ENCODE measurements at regions of chr1 and their contacts with region 1.

Region 1: GRCh38 chr1:233240829-233241682 is 54.5 kb downstream of the PCNX2 start:
- DNase-seq: peak; percentile 76
- H3K4me3 ChIP-seq: no peak overlapping the region
- H3K27ac ChIP-seq: no peak overlapping the region
- H3K4me1 ChIP-seq: no peaks in the 10 kb centered on the region
- H3K27me3 ChIP-seq: no peaks in the 10 kb centered on the region
- CTCF ChIP-seq: peak in 2 of 3 experiments; percentile 58 to 67
- POLR2A ChIP-seq: no peak

Region 2: DNA sequence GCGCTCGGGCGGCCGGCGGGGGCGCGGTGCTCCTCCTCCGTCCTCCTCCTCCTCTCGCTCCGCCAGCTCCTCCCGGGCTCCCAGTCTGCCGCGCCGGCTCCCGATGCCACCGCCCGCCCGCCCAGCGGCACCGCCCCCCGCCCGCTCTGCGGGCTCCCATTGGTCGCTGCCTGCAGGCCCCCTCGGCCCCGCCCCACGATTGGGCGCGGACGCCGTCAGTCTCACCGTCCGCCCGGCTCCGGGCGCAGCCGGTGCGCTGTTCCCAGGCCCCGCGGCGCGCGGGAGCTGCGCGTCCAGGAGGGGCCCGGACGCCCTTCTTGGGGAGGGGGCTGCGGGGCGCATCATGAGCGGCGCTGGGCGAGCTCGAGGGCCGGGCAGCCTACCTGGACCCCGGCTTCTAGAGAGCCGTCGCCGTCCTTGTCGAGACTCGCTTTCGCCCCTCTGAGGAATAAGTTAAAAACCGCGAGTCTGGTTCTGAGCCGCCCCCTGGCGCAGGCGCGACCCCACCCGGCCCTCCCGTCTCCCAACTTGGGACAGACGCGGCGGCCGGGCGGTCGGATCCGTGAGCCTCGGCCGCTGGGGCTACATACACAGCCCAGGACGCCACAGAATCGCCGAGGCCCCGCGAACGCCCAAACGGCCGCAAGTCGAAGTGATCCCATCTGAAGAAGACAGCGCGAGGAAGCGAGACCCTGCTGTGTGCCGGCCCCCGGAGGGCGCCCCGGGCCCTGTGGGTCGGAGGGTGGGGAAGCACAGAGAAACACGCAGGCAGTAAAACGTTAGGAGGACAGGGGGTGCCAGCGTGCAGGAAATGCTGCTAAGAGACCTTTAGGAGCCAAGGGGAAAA is 610.8 kb before region 1 on chr1 and contains the start of gene SIPA1L2:
- intact Hi-C with region 1: loop called (anchors 10 kb)
- DNase-seq: peak; percentile 95
- H3K4me3 ChIP-seq: peak within 1 kb of the TSS; percentile 75 to 80
- H3K27ac ChIP-seq: peak within 1 kb of the TSS; percentile 83 to 88
- H3K4me1 ChIP-seq: peaks cover 4% of the 10 kb centered on the region
- H3K27me3 ChIP-seq: no peaks in the 10 kb centered on the region
- CTCF ChIP-seq: peak; percentile 30 to 52 (median 35)
- POLR2A ChIP-seq: no peak
- total RNA-seq, gene SIPA1L2: 36.1 to 43.4 TPM

Region 3: DNA sequence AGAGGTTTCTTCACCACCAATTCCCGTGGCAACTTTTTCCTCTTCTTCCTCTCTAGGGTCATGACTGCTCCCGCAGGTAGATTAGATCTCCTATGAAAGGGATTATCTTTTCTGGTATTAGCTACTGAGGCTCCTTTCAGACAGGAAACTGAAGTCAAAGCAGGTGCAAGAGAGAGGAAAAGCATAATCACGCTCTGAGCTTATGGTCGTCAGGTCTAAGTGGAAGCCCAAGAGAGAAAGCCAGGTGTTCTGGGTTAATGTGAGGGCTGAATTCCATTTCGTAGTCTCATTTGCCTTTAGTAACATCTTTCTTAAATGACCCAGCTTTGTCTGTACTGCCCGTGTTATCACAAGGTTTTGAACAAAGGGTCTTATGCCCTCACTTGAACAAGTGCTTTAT is 78.2 kb after region 1 on chr1:
- intact Hi-C with region 1: no loop called
- DNase-seq: no peak
- H3K4me3 ChIP-seq: no peak overlapping the region
- H3K27ac ChIP-seq: no peak overlapping the region
- H3K4me1 ChIP-seq: no peaks in the 10 kb centered on the region
- H3K27me3 ChIP-seq: no peaks in the 10 kb centered on the region
- CTCF ChIP-seq: no peak
- POLR2A ChIP-seq: no peak